Breast epithelium (tissue), 4 donors: ENCODE measurements at regions of chr19 and their contacts with region 1.

Region 1: DNA sequence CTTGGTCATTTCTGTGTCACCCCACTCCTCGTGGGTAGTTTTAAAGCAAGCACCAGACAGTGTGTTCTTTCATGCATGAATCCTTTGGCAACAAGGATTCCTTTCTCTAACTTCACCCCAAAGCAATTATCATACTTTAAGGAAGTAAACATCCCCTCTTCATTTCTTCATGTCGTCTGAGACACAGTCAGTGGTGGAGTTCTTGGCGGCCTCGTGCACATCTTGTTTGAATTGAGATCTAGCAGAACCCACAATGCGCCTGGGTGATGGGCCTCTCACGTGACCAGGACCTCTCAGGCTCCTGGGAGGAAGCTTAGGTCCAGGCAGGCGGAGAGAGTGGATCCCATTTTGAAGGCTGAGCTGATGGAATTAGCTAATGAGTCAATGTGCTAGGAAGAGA is 2.6 kb downstream of the ACSBG2 start:
- DNase-seq: no peak
- H3K4me3 ChIP-seq: no peak overlapping the region
- H3K27ac ChIP-seq: no peak overlapping the region
- H3K4me1 ChIP-seq: no peaks in the 10 kb centered on the region
- H3K27me3 ChIP-seq: no peaks in the 10 kb centered on the region
- CTCF ChIP-seq: no peak
- POLR2A ChIP-seq: no peak

Region 2: GRCh38 chr19:5231857-5232503 is 906.1 kb before region 1 on chr19:
- intact Hi-C with region 1: loop called (anchors 10 kb)
- DNase-seq: no peak
- H3K4me3 ChIP-seq: no peak overlapping the region
- H3K27ac ChIP-seq: no peak overlapping the region
- H3K4me1 ChIP-seq: no peaks in the 10 kb centered on the region
- H3K27me3 ChIP-seq: no peaks in the 10 kb centered on the region
- CTCF ChIP-seq: no peak
- POLR2A ChIP-seq: no peak

Region 3: DNA sequence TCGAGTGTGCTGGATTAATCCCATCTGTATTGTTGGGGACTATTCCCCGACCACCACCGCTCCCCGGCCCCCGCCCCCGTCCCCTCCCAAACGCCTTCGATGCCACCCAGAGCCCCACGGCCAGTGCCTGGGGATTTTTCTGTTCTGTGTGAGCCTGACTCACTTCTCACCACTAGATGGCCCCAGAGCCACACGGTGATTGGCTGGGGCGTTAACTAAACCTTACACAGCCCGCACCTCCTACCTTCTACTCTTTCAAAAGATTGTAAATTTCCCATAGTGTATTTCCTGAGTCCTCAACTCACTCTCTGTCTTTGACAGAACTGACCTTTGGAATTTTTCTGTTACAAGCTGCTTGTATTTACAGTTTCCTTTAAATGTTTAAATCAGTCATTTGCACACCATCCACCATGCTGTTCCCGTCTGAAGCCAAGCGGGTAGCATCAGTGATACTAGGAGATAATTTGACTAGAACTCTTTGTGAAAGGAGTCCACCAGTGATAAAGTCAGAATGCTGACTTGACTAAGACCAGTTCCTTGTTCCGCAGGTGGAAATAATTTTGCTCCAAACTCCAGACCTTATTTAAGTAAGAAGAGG is 89.2 kb before region 1 on chr19:
- intact Hi-C with region 1: loop called (anchors 10 kb)
- DNase-seq: peak; percentile 53 to 70
- H3K4me3 ChIP-seq: no peak overlapping the region
- H3K27ac ChIP-seq: no peak overlapping the region
- H3K4me1 ChIP-seq: no peaks in the 10 kb centered on the region
- H3K27me3 ChIP-seq: no peaks in the 10 kb centered on the region
- CTCF ChIP-seq: peak; percentile 66 to 79 (median 77)
- POLR2A ChIP-seq: no peak